ENCODE measurements at regions of chr13 and their contacts with region 1.

Region 1: DNA sequence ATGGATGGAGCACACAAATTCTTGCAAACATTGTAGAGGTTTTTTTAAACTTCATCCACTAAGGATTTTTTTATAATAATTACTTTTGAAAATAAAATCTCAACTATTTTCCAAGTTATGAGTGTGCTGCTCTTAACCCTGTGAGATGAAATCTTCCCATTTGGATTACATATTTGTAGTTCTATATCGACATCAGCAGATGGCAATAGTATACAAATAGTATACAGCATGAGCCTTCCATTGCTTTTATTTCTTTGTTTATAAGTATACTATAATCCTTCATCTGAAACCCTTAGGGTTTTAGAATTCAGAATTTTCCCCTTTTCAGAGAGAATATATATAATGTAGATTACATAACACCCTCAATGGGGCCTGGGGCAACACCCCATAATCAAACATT is 70.5 kb downstream of the GJA3 start:
- DNase-seq: no peak
- H3K4me3 ChIP-seq: no peak overlapping the region
- H3K4me3 Mint-ChIP-seq: no peak overlapping the region
- H3K27ac Mint-ChIP-seq: no peak overlapping the region
- H3K4me1 ChIP-seq: no peaks in the 10 kb centered on the region
- H3K4me1 Mint-ChIP-seq: no peaks in the 10 kb centered on the region
- H3K27me3 ChIP-seq: no peaks in the 10 kb centered on the region
- H3K27me3 Mint-ChIP-seq: no peaks in the 10 kb centered on the region
- CTCF ChIP-seq: peak in 1 of 2 experiments; percentile 4

Region 2: DNA sequence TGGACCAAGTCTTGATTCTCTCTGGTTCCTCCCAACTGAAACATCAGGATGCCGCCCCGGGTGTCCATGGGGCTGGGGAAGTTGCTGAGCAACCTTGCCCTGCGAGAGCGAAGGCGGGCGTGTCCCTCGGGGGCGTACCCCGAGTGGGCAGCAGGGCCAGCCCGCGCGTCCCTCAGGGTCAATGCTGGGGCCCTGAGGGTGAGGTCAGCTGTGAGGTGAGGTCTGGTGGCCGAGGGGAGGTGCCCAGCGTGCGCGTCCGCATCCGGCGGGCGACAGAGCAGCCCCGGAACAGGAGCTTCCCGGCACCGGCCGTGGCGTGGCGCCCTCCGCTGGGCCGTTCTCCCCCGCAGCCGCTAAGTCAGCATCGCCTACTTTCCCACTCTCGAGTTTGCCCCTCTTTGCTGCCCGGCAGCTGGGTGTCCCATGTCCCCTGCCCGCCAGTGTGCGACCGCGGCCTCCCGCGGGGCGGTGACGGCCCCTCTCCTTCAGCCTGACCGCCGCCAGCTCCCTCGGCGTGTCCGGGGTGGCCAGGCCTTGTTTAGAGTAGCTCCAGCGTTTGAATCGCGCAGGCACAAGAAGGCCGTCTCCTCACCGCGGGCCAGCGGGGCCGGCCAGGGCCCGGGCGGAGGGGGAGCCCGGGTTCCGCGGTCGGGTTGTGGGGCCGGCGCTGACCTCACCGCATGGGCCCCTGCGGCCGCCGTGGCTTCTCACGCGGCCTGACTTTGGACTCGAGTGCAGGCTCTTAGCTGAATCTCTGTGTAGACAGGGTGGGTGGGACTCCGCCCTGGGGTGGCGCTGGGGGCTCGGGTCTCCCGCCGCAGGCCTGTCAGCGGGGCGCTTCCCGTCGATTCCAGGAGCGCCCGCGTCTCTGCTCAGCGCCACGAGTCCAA is 37.5 kb after region 1 on chr13:
- CTCF ChIA-PET with region 1: interaction called, 3 read pairs
- POLR2A ChIA-PET with region 1: interaction called, 3 read pairs
- intact Hi-C with region 1: loop called (anchors 2 kb)
- DNase-seq: peak; percentile 69 to 84
- H3K4me3 ChIP-seq: peak overlapping the region; percentile 81
- H3K4me3 Mint-ChIP-seq: peak overlapping the region; percentile 64
- H3K27ac Mint-ChIP-seq: no peak overlapping the region
- H3K4me1 ChIP-seq: no peaks in the 10 kb centered on the region
- H3K4me1 Mint-ChIP-seq: peaks cover 6% of the 10 kb centered on the region
- H3K27me3 ChIP-seq: no peaks in the 10 kb centered on the region
- H3K27me3 Mint-ChIP-seq: peaks cover 3% of the 10 kb centered on the region
- CTCF ChIP-seq: peak in 1 of 2 experiments; percentile 74

Region 3: GRCh38 chr13:20320885-20321284 is 230.5 kb after region 1 on chr13:
- CTCF ChIA-PET with region 1: no interaction called
- POLR2A ChIA-PET with region 1: no interaction called
- intact Hi-C with region 1: no loop called
- DNase-seq: no peak
- H3K4me3 ChIP-seq: no peak overlapping the region
- H3K4me3 Mint-ChIP-seq: no peak overlapping the region
- H3K27ac Mint-ChIP-seq: no peak overlapping the region
- H3K4me1 ChIP-seq: no peaks in the 10 kb centered on the region
- H3K4me1 Mint-ChIP-seq: no peaks in the 10 kb centered on the region
- H3K27me3 ChIP-seq: no peaks in the 10 kb centered on the region
- H3K27me3 Mint-ChIP-seq: peaks cover 15% of the 10 kb centered on the region
- CTCF ChIP-seq: no peak

Measured in Caco-2 (cell line).